WTC11 (cell line): ENCODE measurements at regions of chr3 and their contacts with region 1.

Region 1: GRCh38 chr3:48548729-48549705 is 7.6 kb downstream of the PFKFB4 start:
- DNase-seq: peak; percentile 91
- ATAC-seq: peak; percentile 97
- H3K4me3 Mint-ChIP-seq: no peak overlapping the region
- H3K27ac Mint-ChIP-seq: peak overlapping the region; percentile 87
- H3K4me1 Mint-ChIP-seq: peaks cover 16% of the 10 kb centered on the region
- H3K27me3 Mint-ChIP-seq: no peaks in the 10 kb centered on the region
- CTCF ChIP-seq: peak; percentile 76

Region 2: DNA sequence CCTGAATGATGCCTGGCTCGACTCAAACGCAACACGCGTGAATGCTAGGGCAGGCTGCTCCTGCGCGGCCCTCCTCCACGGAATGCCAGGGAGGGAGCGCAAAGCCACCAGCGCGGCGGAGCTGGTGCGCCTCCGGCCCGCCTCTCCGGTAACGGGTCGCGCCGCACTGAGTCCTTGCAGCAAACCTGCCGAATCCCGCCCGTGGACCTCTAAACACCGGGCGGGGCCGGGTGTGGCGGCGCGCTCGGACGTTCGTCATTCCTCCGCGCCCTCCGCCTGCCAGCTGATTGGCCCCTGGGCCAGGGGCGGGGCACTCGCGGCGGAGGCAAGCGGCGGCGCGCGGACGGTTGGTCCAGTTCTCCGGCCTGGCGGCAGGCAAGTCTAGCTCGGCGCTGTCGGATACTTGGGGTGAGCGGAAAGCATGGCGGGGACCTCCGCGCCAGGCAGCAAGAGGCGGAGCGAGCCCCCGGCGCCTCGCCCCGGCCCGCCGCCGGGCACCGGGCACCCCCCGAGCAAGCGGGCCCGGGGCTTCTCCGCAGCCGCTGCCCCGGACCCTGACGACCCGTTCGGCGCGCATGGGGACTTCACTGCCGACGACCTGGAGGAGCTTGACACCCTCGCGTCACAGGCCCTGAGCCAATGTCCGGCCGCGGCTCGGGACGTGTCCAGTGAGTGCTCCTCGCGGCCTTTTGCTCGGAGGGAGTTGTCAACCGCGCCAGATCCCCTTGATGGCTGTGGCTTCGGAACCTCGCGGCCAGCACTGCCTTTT is 102.4 kb before region 1 on chr3 and contains the start of gene ATRIP:
- CTCF ChIA-PET with region 1: interaction called, 11 read pairs
- POLR2A ChIA-PET with region 1: no interaction called
- DNase-seq: peak; percentile 93
- ATAC-seq: peak; percentile 92
- H3K4me3 Mint-ChIP-seq: peak within 1 kb of the TSS; percentile 94
- H3K27ac Mint-ChIP-seq: peak within 1 kb of the TSS; percentile 89
- H3K4me1 Mint-ChIP-seq: peaks cover 26% of the 10 kb centered on the region
- H3K27me3 Mint-ChIP-seq: no peaks in the 10 kb centered on the region
- CTCF ChIP-seq: no peak
- total RNA-seq, gene ATRIP: 15.5 to 18.2 TPM (median 15.6 TPM) in 3 replicates

Region 3: DNA sequence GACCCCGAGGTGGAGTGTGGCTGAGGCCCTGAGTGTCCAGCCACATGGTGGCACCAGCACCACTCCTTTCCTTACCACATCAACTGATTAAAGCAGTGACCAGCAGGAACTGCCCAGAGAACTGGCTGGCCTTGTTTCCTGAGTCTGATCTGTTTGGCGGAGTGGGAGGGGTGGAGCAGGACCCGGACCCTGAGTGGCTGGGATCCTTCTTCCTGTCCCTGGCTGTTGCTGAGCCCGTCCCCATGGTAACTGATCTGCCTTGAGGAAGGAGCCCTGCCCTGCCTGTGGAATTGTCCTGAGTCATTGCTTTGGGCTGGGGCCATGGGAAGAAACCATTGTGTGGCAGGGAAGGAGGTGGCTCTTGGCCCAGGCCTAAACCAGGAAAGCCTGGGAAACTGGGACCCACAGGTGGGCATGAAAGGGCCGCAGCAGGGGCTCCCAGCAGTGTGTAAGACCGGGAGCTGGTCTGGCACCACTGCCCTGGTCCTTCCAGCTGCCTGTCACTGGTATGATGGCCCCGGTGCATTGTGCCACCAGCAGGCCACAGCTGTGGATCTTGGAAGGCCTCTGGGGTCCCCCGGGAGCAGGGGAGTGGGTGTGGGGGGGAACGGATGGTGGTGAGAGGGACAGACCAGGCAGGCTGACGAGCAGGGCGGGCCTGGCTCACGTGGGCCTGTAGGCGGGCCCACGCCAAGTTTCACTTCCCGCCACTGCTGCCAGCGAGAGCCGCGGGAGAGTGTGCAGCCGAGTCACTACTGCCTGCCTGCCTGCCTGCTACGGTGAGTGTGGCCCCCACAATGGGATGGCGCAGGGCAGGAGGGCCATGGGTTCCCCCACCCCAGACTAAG is 83.3 kb before region 1 on chr3:
- CTCF ChIA-PET with region 1: interaction called, 23 read pairs
- POLR2A ChIA-PET with region 1: interaction called, 3 read pairs
- DNase-seq: peak; percentile 92
- ATAC-seq: peak; percentile 94
- H3K4me3 Mint-ChIP-seq: peak overlapping the region; percentile 7
- H3K27ac Mint-ChIP-seq: peak overlapping the region; percentile 97
- H3K4me1 Mint-ChIP-seq: peaks cover 21% of the 10 kb centered on the region
- H3K27me3 Mint-ChIP-seq: no peaks in the 10 kb centered on the region
- CTCF ChIP-seq: no peak

Region 4: GRCh38 chr3:48472915-48473616 is 76.0 kb before region 1 on chr3:
- CTCF ChIA-PET with region 1: interaction called, 54 read pairs
- POLR2A ChIA-PET with region 1: interaction called, 3 read pairs
- DNase-seq: peak; percentile 96
- ATAC-seq: peak; percentile 82
- H3K4me3 Mint-ChIP-seq: peak overlapping the region; percentile 91
- H3K27ac Mint-ChIP-seq: peak overlapping the region; percentile 99
- H3K4me1 Mint-ChIP-seq: peaks cover 30% of the 10 kb centered on the region
- H3K27me3 Mint-ChIP-seq: no peaks in the 10 kb centered on the region; the same call in none of the 2 replicates
- CTCF ChIP-seq: peak; percentile 45; the same call in 1 of the 2 replicates

Region 5: DNA sequence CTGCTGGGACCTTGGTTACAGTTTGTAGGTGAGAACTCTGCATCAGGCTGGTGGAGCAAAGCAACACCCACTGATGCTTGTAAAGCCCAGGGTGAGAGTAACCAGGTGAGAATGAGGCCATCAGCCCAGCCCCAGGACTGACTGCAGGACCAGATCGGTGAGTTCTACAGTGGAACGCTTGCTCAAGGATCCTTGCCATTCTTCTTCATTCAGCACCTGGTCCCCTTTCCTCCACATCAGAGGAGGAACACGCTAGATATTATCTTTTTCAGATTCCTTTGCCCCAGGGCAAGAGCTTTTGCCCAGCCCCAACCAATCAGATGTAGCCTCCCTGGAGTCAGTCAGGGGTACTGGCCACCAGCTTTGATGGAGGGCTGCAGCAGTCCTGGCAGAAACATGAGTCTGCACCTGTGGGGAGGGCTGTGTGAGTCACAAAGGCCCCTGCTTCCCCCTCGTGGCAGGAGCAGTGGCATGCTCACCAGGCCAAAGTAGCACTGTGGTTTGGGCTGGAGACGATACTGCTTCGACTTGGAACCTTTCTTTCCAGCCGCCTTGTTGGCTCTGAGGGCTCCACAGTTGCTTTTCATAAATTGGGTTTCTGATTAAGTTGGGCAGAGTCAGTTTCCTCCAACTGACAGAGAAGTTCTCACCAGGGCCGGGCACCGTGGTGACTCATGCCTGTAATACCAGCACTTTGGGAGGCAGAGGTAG is 41.5 kb before region 1 on chr3:
- CTCF ChIA-PET with region 1: interaction called, 10 read pairs
- POLR2A ChIA-PET with region 1: no interaction called
- DNase-seq: peak; percentile 84
- ATAC-seq: peak; percentile 85
- H3K4me3 Mint-ChIP-seq: no peak overlapping the region
- H3K27ac Mint-ChIP-seq: peak overlapping the region; percentile 90
- H3K4me1 Mint-ChIP-seq: peaks cover 36% of the 10 kb centered on the region
- H3K27me3 Mint-ChIP-seq: no peaks in the 10 kb centered on the region; the same call in none of the 2 replicates
- CTCF ChIP-seq: 0 out of 2 replicates have a peak, but pooled peaks have one; percentile 17